Activated naive CD4-positive, alpha-beta T cell treated with anti-CD3 and anti-CD28 coated beads for 36 hours (primary cell): ENCODE measurements at regions of chr19 and their contacts with region 1.

Region 1: DNA sequence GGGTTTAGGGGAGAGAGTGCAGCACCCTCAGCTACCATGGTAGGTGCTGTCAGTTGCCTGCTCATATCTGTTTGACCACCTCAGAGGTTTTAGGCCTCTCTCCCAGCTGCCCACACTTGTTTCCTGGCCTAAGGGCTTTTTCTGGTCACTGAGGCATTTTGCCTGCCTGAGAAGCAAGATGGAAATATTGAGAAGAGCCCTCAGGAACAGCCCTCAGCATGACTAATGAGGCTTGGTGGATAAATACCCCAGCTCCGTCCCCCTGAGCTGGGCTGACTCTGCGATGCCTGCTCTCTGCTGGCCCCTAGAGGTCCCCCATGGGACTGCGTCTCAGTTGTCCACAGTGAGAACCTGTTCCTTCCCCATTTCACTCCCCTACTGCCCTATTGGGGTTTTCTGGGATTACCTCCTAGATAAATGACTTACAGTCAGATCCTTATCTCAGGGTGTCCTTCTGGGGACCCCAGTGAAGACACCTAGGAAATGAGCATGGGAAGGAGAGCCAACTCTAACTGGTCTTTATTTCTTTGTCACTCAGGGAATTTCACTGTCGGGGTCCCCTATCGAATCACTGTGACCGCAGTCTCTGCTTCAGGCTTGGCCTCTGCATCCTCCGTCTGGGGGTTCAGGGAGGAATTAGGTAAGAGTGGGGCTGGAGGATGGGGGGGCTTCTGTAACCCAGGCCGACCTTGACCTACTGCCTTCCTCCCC is 13.3 kb downstream of the PALM3 start:
- DNase-seq: peak; percentile 81
- H3K4me3 Mint-ChIP-seq: no peak overlapping the region
- H3K27ac Mint-ChIP-seq: peak overlapping the region; percentile 30
- H3K4me1 Mint-ChIP-seq: no peaks in the 10 kb centered on the region
- H3K27me3 Mint-ChIP-seq: no peaks in the 10 kb centered on the region

Region 2: GRCh38 chr19:13905938-13906904 is 142.4 kb before region 1 on chr19 and contains the starts of genes BRME1 and CC2D1A:
- CTCF ChIA-PET with region 1: interaction called, 5 read pairs
- intact Hi-C with region 1: loop called (anchors 2 kb)
- DNase-seq: peak; percentile 97
- H3K4me3 Mint-ChIP-seq: peak within 1 kb of the TSS; percentile 86
- H3K27ac Mint-ChIP-seq: peak within 1 kb of the TSS; percentile 88
- H3K4me1 Mint-ChIP-seq: peaks cover 30% of the 10 kb centered on the region
- H3K27me3 Mint-ChIP-seq: no peaks in the 10 kb centered on the region
- total RNA-seq, gene BRME1: 5.8 to 5.9 TPM
- total RNA-seq, gene CC2D1A: 27.4 to 28.6 TPM

Region 3: DNA sequence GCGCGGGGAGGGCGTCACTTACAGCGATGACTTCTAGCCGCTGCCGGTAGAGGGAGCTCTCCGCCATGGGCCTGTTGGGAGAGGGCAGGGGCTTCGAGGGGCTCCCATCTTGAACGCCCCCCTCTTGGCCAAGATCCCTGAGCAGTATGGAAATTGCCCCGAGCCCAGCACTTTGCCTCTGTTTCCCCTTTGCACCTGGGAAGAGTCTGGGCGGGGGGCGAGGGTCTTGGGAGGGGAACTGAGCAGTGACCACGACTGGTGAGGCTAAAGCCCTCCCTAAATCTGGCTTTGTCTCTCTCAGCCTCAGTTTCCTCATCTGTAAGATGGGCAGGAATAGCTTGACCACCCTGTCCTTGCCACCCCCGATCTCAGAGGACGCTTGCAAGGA is 10.5 kb after region 1 on chr19:
- CTCF ChIA-PET with region 1: interaction called, 31 read pairs
- intact Hi-C with region 1: no loop called
- DNase-seq: peak; percentile 53
- H3K4me3 Mint-ChIP-seq: no peak overlapping the region
- H3K27ac Mint-ChIP-seq: no peak overlapping the region
- H3K4me1 Mint-ChIP-seq: peaks cover 17% of the 10 kb centered on the region
- H3K27me3 Mint-ChIP-seq: peaks cover 37% of the 10 kb centered on the region